IMR-90 (cell line): ENCODE measurements at regions of chr5 and their contacts with region 1.

Region 1: GRCh38 chr5:25669645-25670401 is 1025.0 kb upstream of the CDH10 start:
- DNase-seq: no peak
- ATAC-seq: no peak
- H3K4me3 ChIP-seq: no peak overlapping the region
- H3K27ac ChIP-seq: no peak overlapping the region
- H3K4me1 ChIP-seq: no peaks in the 10 kb centered on the region
- H3K27me3 ChIP-seq: no peaks in the 10 kb centered on the region
- CTCF ChIP-seq: no peak
- POLR2A ChIP-seq: no peak
- RAD21 ChIP-seq: no peak

Region 2: DNA sequence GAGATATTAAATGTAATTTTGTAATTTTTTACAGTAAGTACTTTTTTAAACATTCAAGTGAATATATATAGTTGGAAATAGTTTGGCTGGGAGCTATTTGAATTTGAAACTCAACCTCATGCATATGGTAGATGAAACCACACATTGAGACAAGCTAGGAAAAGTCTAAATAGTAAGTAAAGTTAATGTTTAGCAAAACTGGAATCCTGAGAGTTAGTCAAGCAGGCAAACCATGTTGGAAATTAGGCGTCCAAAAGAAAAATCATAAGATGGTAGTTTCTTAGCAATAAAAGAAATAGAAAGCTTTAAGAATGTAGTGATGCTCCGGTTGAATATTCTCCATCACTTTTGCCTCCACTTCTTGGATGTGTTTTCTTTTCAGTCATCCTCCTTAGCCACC is 368.0 kb before region 1 on chr5:
- CTCF ChIA-PET with region 1: no interaction called
- POLR2A ChIA-PET with region 1: no interaction called
- dilution Hi-C with region 1: no loop called
- in situ Hi-C with region 1: no loop called
- intact Hi-C with region 1: no loop called
- DNase-seq: no peak
- ATAC-seq: no peak
- H3K4me3 ChIP-seq: no peak overlapping the region
- H3K27ac ChIP-seq: no peak overlapping the region
- H3K4me1 ChIP-seq: no peaks in the 10 kb centered on the region
- H3K27me3 ChIP-seq: no peaks in the 10 kb centered on the region
- CTCF ChIP-seq: no peak
- POLR2A ChIP-seq: no peak
- RAD21 ChIP-seq: no peak

Region 3: DNA sequence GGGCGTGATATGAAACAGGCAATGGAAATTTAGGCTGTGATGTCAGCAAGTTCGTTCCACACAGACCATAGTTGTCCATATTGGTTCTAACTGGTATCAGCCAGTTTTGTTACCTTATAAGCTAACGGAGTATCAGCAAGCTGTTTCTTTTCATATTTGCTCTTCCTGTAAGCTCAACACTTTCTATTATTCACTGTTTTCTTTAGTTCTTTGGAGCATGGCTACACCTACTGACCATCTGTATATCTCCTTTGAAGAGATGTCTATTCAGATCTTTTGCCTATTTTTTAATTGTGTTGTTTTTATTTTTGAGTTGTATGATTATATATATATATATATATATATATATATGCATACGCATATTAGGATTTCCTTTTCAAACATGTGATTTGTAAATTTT is 32.1 kb after region 1 on chr5:
- CTCF ChIA-PET with region 1: no interaction called
- POLR2A ChIA-PET with region 1: no interaction called
- dilution Hi-C with region 1: no loop called
- in situ Hi-C with region 1: no loop called
- intact Hi-C with region 1: loop called (anchors 1 kb)
- DNase-seq: no peak
- ATAC-seq: no peak
- H3K4me3 ChIP-seq: no peak overlapping the region
- H3K27ac ChIP-seq: no peak overlapping the region
- H3K4me1 ChIP-seq: no peaks in the 10 kb centered on the region
- H3K27me3 ChIP-seq: no peaks in the 10 kb centered on the region
- CTCF ChIP-seq: no peak
- POLR2A ChIP-seq: no peak
- RAD21 ChIP-seq: no peak

Region 4: GRCh38 chr5:26205121-26205520 is 535.3 kb after region 1 on chr5:
- CTCF ChIA-PET with region 1: no interaction called
- POLR2A ChIA-PET with region 1: no interaction called
- dilution Hi-C with region 1: no loop called
- in situ Hi-C with region 1: no loop called
- intact Hi-C with region 1: no loop called
- DNase-seq: no peak
- ATAC-seq: no peak
- H3K4me3 ChIP-seq: no peak overlapping the region
- H3K27ac ChIP-seq: no peak overlapping the region
- H3K4me1 ChIP-seq: no peaks in the 10 kb centered on the region
- H3K27me3 ChIP-seq: no peaks in the 10 kb centered on the region
- CTCF ChIP-seq: no peak
- POLR2A ChIP-seq: no peak
- RAD21 ChIP-seq: no peak